B cell (primary cell): ENCODE measurements at regions of chr10 and their contacts with region 1.

Region 1: DNA sequence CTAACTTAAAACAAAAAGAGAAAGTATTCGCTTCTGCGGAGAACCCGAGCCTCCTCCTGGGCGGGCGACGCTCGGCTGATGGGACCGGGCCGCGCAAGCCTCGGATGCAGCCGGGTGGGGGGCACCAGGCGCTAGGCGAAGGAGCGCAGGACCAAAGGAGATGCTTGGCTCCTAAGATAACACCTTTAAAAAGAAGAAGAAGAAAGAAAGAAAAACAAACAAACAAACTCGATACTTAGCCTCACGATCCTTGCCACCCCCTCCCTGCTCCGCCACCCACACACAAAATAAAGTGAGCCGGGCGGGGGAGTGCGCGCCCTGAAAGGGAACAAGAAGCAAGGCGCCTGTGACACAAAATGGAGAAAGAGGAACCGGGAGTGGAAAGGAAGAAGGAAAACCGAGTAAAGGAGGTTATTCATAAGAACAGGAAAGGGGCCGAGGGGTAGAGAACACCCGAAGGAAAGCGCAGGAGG is 34.0 kb upstream of the EBLN1 start:
- DNase-seq: peak; percentile 90
- ATAC-seq: peak; percentile 56
- H3K4me3 ChIP-seq: peak overlapping the region; percentile 77 to 95 (median 86)
- H3K4me3 Mint-ChIP-seq: peak overlapping the region; percentile 97
- H3K27ac ChIP-seq: peak overlapping the region; percentile 95 to 97
- H3K27ac Mint-ChIP-seq: peak overlapping the region; percentile 100
- H3K4me1 ChIP-seq: peaks cover 9 to 15% of the 10 kb centered on the region in 2 donors
- H3K4me1 Mint-ChIP-seq: peaks cover 26% of the 10 kb centered on the region
- H3K27me3 ChIP-seq: no peaks in the 10 kb centered on the region
- H3K27me3 Mint-ChIP-seq: no peaks in the 10 kb centered on the region
- CTCF ChIP-seq: no peak

Region 2: DNA sequence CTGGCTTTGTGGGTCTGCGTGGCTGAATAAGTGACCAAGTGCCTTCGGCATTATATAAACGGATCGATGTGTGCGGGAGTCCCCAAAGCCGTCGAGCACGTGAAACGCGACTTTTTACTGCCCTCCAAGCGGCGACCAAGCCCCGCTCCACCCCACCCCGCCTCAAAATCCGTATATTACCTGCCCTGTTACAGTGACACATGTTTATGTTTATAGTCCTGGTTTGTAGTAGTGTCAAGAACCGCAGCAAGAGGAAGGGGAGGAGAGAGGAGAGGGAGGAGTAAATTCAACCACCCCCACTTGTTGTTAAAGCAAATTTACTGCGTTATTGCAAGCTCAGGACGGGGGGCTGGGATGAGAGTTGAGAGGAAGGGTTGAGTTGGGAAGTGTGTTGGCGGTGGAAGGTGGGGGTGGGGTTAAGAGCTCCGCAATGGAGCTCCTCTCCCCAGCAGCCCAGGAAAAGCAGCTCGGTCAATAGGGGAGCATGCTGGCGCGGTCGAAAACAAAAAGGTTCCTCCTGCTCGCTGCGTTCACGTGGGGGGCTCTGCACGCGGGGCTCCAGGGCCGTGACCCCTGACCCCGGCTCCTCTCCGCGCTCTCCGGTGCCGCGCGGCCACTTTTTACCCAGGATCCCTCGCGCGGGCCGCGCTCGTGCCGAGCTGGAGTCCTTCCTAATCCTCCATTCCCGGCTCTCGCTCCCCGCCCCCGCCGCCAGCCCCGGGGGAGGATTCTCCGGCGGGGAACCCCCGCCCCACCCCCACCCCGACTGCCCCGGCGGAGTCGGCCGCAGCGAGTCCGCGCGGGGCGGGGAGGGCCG is 726.2 kb before region 1 on chr10 and contains the start of gene SKIDA1:
- CTCF ChIA-PET with region 1: no interaction called
- POLR2A ChIA-PET with region 1: no interaction called
- intact Hi-C with region 1: loop called (anchors 2 kb)
- DNase-seq: peak; percentile 69
- ATAC-seq: peak; percentile 65
- H3K4me3 ChIP-seq: peak within 1 kb of the TSS; percentile 60 to 73 (median 64)
- H3K4me3 Mint-ChIP-seq: peak within 1 kb of the TSS; percentile 89
- H3K27ac ChIP-seq: peak within 1 kb of the TSS; percentile 31 to 52
- H3K27ac Mint-ChIP-seq: peak within 1 kb of the TSS; percentile 91
- H3K4me1 ChIP-seq: peaks cover 24 to 37% of the 10 kb centered on the region in 2 donors
- H3K4me1 Mint-ChIP-seq: peaks cover 25% of the 10 kb centered on the region
- H3K27me3 ChIP-seq: peaks cover 0 to 52% (median 46%) of the 10 kb centered on the region in 4 experiments
- H3K27me3 Mint-ChIP-seq: peaks cover 59% of the 10 kb centered on the region
- CTCF ChIP-seq: no peak
- total RNA-seq, gene SKIDA1: 0.10 TPM in 1 of 2 replicates, not detected in the other

Region 3: GRCh38 chr10:22218451-22218850 is 33.3 kb before region 1 on chr10:
- CTCF ChIA-PET with region 1: no interaction called
- POLR2A ChIA-PET with region 1: no interaction called
- intact Hi-C with region 1: no loop called
- DNase-seq: no peak
- ATAC-seq: no peak
- H3K4me3 ChIP-seq: no peak overlapping the region
- H3K4me3 Mint-ChIP-seq: no peak overlapping the region
- H3K27ac ChIP-seq: no peak overlapping the region
- H3K27ac Mint-ChIP-seq: no peak overlapping the region
- H3K4me1 ChIP-seq: no peaks in the 10 kb centered on the region
- H3K4me1 Mint-ChIP-seq: no peaks in the 10 kb centered on the region
- H3K27me3 ChIP-seq: no peaks in the 10 kb centered on the region
- H3K27me3 Mint-ChIP-seq: peaks cover 25% of the 10 kb centered on the region
- CTCF ChIP-seq: no peak

Region 4: DNA sequence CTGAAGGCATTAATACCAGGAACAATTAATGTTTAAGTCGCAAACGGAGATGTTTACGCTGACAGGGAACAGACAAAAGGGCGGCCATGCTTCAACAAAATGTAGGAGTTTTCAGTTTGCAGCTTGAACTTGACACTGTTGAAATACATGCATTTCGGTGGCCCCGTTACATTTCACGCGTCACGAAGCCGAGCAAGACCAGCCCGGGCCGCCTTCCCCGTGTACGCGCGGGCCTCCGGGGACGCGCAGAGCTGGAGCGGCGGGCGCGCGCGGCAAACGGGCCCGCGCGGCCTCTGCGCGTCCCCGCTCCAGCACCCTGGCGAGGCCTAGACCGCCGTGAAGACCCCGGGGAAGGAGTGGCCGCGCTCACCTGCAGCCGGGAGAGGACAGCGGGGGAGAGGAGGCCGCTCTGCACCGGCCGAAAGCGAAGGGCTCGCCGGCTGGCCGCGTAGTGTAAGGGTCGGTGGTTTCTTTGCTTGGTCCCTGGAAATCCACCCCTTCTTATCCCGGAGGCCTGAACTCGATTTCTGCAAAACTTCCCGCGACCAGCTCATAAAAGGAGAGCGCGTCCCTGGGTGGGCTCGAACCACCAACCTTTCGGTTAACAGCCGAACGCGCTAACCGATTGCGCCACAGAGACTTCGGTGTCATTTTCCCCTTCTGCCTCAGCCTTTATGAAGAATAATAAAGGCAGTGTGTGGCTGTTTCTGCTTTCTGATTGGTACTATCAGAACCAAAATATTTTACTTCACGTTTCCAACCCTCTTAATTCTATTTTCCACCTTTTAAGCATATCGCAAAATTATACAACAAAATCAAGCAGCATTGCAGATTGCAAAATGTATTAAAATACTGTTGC is 22.6 kb before region 1 on chr10:
- CTCF ChIA-PET with region 1: interaction called, 25 read pairs
- POLR2A ChIA-PET with region 1: interaction called, 11 read pairs
- intact Hi-C with region 1: loop called (anchors 1 kb)
- DNase-seq: peak; percentile 96
- ATAC-seq: peak; percentile 81
- H3K4me3 ChIP-seq: peak overlapping the region; percentile 68 to 83 (median 81)
- H3K4me3 Mint-ChIP-seq: peak overlapping the region; percentile 90
- H3K27ac ChIP-seq: peak overlapping the region; percentile 66 to 77
- H3K27ac Mint-ChIP-seq: peak overlapping the region; percentile 100
- H3K4me1 ChIP-seq: no peaks in the 10 kb centered on the region
- H3K4me1 Mint-ChIP-seq: peaks cover 14% of the 10 kb centered on the region
- H3K27me3 ChIP-seq: no peaks in the 10 kb centered on the region
- H3K27me3 Mint-ChIP-seq: peaks cover 7% of the 10 kb centered on the region
- CTCF ChIP-seq: no peak

Region 5: DNA sequence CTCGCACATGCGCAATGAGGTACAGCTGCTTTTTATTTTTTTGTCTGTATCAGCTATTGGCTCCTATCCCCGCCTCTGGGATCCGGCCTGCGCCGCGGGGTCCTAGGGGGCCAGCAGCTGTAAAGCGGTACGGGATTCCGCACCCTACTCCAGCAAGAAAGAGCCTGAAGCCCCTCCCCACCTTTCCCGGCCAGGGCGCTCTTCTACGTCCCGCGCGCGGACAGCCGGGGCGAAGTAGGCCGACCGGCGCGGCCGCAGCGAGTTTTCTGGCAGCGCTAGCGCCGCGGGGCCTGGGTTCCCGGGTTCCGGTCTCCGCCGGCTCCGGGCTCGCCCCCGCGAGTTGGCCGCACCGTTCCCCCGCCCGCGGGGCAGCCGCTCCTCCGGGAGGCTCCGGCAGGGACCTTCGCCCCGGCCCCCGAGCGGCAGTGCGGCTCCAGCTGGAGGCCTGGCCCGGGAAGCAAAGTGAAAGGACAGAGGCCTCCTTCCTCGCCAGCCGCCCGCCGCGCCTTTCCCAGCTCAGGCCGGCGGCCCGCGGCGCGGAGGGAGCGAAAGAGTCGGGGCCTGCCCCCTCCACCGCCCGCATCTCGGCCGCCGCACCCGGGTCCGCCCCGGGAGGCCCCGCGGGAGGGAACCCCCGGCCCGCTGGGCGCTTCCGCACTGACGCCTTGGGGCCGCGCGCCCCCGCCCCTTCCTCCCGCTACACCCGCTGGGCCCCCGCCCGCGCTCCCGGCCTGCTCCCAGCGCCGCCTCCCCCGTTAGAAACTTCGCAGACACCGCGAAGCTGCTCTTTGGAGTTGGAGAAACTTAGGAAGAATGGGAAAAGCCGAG is 88.8 kb after region 1 on chr10:
- CTCF ChIA-PET with region 1: interaction called, 4 read pairs
- POLR2A ChIA-PET with region 1: interaction called, 3 read pairs
- intact Hi-C with region 1: loop called (anchors 1 kb)
- DNase-seq: peak; percentile 92
- ATAC-seq: peak; percentile 62
- H3K4me3 ChIP-seq: peak overlapping the region; percentile 62 to 79 (median 73)
- H3K4me3 Mint-ChIP-seq: peak overlapping the region; percentile 94
- H3K27ac ChIP-seq: peak overlapping the region; percentile 70 to 81
- H3K27ac Mint-ChIP-seq: peak overlapping the region; percentile 94
- H3K4me1 ChIP-seq: peaks cover 38 to 72% of the 10 kb centered on the region in 2 donors
- H3K4me1 Mint-ChIP-seq: peaks cover 31% of the 10 kb centered on the region
- H3K27me3 ChIP-seq: peaks cover 11 to 86% (median 73%) of the 10 kb centered on the region in 4 experiments
- H3K27me3 Mint-ChIP-seq: peaks cover 58% of the 10 kb centered on the region
- CTCF ChIP-seq: no peak

Region 6: DNA sequence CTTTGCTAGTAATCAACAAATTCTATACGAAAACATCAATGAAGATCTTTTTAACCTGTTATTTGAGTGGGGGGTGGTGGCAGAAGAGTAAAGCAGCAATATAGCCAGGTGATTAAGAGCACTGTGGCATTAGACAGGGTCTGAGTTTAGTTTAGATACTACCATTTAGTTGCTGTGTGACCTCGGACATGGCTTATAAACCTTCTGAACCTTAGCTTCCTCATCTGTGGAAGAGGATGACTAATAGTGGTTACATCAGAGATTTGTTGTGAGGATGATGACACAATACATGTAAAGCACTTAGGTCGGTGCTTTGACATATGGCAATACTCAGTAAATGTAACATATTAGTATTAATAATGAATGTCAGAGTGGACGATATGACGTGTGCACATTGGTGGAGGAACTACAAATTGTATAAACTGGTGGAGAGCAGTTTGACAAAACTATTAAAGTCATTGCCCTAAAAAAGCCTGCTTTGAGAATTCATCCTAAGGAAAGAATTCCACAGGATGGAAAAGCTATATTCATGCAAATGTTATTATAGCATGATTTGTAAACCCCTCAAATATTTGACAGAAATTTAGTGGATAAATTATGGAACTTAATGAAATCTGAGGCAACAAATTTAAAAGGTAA is 117.8 kb after region 1 on chr10:
- CTCF ChIA-PET with region 1: no interaction called
- POLR2A ChIA-PET with region 1: no interaction called
- intact Hi-C with region 1: no loop called
- DNase-seq: no peak
- ATAC-seq: peak; percentile 28
- H3K4me3 ChIP-seq: no peak overlapping the region
- H3K4me3 Mint-ChIP-seq: no peak overlapping the region
- H3K27ac ChIP-seq: no peak overlapping the region
- H3K27ac Mint-ChIP-seq: no peak overlapping the region
- H3K4me1 ChIP-seq: peaks cover 7 to 8% of the 10 kb centered on the region in 2 donors
- H3K4me1 Mint-ChIP-seq: peaks cover 17% of the 10 kb centered on the region
- H3K27me3 ChIP-seq: no peaks in the 10 kb centered on the region
- H3K27me3 Mint-ChIP-seq: no peaks in the 10 kb centered on the region
- CTCF ChIP-seq: no peak

Region 7: DNA sequence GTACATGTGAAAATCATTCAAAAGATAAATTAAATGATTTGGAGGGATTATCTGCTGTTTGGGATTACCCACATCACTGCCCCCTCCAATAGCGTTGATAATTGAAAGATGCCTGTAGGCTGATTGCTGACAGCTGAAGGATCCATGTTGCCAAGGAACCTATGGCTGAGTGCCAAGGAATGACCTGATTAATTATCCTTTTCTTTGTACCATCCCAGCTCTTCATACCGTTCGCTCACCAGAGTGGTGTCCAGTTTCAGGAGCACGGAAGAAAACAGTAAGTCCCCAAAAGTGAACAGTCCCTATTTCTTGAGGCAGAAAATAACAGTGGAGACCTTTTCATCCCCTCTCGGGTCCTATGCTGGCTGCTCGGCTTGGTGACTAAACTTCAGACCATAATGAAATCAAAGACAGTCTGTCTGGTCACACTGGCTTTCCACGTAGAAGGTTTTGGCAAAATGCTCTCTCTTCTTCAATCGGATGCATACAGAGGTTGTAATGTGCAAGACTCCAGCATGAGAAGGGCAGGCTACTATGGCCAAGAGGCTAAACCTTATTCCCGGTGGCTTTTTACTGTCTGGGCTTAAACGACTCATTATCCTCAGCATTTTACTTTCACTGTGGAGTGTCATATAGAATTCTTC is 202.3 kb after region 1 on chr10:
- CTCF ChIA-PET with region 1: no interaction called
- POLR2A ChIA-PET with region 1: no interaction called
- intact Hi-C with region 1: no loop called
- DNase-seq: no peak
- ATAC-seq: no peak
- H3K4me3 ChIP-seq: peak overlapping the region in 1 of 5 experiments; percentile 41
- H3K4me3 Mint-ChIP-seq: no peak overlapping the region
- H3K27ac ChIP-seq: peak overlapping the region in 1 of 2 donors; percentile 25
- H3K27ac Mint-ChIP-seq: peak overlapping the region; percentile 42
- H3K4me1 ChIP-seq: peaks cover 20 to 27% of the 10 kb centered on the region in 2 donors
- H3K4me1 Mint-ChIP-seq: peaks cover 28% of the 10 kb centered on the region
- H3K27me3 ChIP-seq: no peaks in the 10 kb centered on the region
- H3K27me3 Mint-ChIP-seq: no peaks in the 10 kb centered on the region
- CTCF ChIP-seq: no peak

Region 8: DNA sequence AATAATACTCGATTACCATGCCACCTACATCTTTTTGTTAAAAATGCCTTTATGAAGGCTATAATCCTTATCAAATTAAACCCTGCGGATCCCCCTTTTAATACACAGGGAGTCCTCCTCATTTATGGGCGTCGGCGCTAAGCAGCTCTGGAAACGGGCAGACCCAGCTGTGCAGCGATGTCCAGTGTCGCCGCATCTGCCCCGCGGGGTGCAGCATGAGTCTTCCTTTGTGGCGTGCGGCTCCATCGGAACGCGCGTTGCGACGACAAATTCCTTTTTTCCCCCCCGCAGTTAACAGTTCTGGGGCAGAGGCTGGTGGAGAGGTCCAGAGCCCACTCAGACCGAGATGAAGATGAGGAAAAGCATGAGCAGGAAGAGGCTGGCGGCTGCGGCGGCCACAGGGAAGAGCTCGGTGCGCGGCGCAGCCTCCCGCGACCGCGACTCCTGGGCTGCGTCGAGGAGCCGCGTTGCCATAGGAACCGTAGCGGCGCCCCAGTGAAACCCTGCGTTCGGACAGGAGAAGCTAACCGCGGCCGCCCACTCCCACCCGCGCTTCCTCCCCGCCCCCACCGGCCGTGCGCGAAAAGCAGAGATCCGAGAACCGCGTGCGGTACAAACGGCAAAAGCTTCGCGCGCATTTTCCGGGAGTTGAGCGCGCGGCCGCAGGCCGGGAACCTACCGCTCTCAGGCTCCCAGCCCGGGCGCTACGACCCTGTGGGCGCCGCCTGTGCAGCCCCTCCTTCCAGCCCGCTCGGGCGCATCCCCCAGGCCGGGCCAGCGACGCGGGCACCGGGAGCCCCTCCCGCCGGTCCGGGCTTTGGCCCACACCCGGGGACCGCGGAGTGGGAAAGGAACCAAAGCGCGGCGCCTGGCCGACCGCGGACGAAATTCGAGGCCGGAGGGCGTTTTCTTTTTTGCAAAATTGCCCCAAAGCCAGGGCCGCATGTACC is 224.1 kb after region 1 on chr10:
- CTCF ChIA-PET with region 1: no interaction called
- POLR2A ChIA-PET with region 1: no interaction called
- intact Hi-C with region 1: loop called (anchors 5 kb)
- DNase-seq: peak; percentile 68
- ATAC-seq: peak; percentile 31
- H3K4me3 ChIP-seq: peak overlapping the region; percentile 35 to 58 (median 41)
- H3K4me3 Mint-ChIP-seq: peak overlapping the region; percentile 95
- H3K27ac ChIP-seq: no peak overlapping the region
- H3K27ac Mint-ChIP-seq: peak overlapping the region; percentile 72
- H3K4me1 ChIP-seq: peaks cover 20 to 25% of the 10 kb centered on the region in 2 donors
- H3K4me1 Mint-ChIP-seq: peaks cover 15% of the 10 kb centered on the region
- H3K27me3 ChIP-seq: peaks cover 1 to 55% (median 44%) of the 10 kb centered on the region in 4 experiments
- H3K27me3 Mint-ChIP-seq: peaks cover 47% of the 10 kb centered on the region
- CTCF ChIP-seq: no peak

Region 9: GRCh38 chr10:22704471-22704911 is 452.7 kb after region 1 on chr10:
- CTCF ChIA-PET with region 1: no interaction called
- POLR2A ChIA-PET with region 1: interaction called, 10 read pairs
- intact Hi-C with region 1: no loop called
- DNase-seq: peak; percentile 61
- ATAC-seq: peak; percentile 70
- H3K4me3 ChIP-seq: peak overlapping the region in 2 of 5 experiments; percentile 12 to 16
- H3K4me3 Mint-ChIP-seq: peak overlapping the region; percentile 79
- H3K27ac ChIP-seq: peak overlapping the region; percentile 25 to 57
- H3K27ac Mint-ChIP-seq: peak overlapping the region; percentile 91
- H3K4me1 ChIP-seq: peaks cover 79 to 80% of the 10 kb centered on the region in 2 donors
- H3K4me1 Mint-ChIP-seq: peaks cover 90% of the 10 kb centered on the region
- H3K27me3 ChIP-seq: no peaks in the 10 kb centered on the region
- H3K27me3 Mint-ChIP-seq: no peaks in the 10 kb centered on the region
- CTCF ChIP-seq: no peak